ENCODE measurements at regions of chr9 and their contacts with region 1.

Region 1: DNA sequence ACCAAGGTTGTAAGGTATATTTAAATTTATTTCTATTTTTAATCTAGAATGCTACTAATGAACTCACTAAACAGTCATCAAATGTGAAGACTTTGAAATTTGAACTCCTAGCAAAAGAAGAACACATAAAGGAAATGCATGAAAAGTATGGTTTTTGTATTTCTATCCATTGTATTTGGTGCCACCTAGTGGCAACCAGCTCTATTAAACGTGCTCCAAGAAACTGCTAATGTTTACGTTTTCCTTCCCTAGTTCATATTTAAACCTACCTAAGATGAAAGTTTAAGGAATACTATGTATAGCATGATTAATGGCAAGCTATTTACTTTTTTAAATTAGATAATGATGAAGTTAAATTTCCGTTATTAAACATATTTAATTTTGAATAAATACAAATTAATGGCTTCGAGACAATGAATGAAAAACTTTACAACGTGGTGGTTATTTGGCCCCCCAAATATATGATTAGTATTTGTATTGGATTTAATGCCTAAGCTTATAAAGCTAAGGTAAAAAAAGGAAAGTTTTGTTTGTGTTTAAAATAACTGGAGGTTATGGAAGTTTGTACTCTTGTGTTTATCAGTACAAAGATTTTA is 115.9 kb upstream of the SH3GL2 start:
- DNase-seq: peak in 2 of 9 donors; percentile 0 to 25
- ATAC-seq: no peak
- H3K4me3 ChIP-seq: no peak overlapping the region
- H3K4me3 Mint-ChIP-seq: no peak overlapping the region
- H3K27ac ChIP-seq: no peak overlapping the region
- H3K27ac Mint-ChIP-seq: no peak overlapping the region
- H3K4me1 ChIP-seq: no peaks in the 10 kb centered on the region
- H3K4me1 Mint-ChIP-seq: no peaks in the 10 kb centered on the region
- H3K27me3 ChIP-seq: no peaks in the 10 kb centered on the region
- H3K27me3 Mint-ChIP-seq: no peaks in the 10 kb centered on the region

Region 2: DNA sequence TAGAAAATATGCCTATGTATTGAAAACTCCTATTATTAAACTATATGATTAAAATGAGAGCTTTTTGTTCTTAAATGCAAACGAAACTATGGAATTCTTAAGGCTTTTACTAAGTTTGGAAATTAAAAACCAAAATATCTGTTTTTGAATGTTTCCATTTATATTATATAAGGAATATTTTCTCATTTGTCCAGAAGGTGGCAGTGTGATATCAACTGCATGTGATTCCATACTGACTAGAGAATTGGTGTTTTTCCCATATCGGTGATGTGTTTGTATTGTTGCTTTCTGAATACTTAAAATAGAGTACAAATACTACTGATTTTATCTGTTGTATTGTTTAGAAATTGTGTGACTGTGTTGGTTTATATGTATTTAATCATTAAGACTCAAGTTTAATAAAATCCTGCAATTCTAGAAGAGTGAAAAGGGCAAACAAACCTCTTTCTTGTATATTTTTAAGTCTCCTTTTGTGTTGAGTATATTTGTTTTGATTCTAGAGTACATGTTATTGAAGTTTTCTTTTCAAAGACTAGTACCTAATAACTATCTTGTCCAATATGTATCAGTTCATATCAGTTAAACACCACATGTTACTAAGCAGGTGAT is 1589.3 kb before region 1 on chr9:
- CTCF ChIA-PET with region 1: no interaction called
- POLR2A ChIA-PET with region 1: no interaction called
- intact Hi-C with region 1: loop called in 1 of 2 experiments (anchors 1 kb)
- DNase-seq: peak in 5 of 9 donors; percentile 1 to 11 (median 1)
- ATAC-seq: no peak
- H3K4me3 ChIP-seq: no peak overlapping the region
- H3K4me3 Mint-ChIP-seq: no peak overlapping the region
- H3K27ac ChIP-seq: no peak overlapping the region
- H3K27ac Mint-ChIP-seq: no peak overlapping the region
- H3K4me1 ChIP-seq: no peaks in the 10 kb centered on the region
- H3K4me1 Mint-ChIP-seq: no peaks in the 10 kb centered on the region
- H3K27me3 ChIP-seq: no peaks in the 10 kb centered on the region
- H3K27me3 Mint-ChIP-seq: peaks cover 0 to 5% (median 0%) of the 10 kb centered on the region in 5 donors

Region 3: GRCh38 chr9:16191691-16192402 is 1271.1 kb before region 1 on chr9:
- CTCF ChIA-PET with region 1: no interaction called
- POLR2A ChIA-PET with region 1: no interaction called
- intact Hi-C with region 1: loop called in 1 of 2 experiments (anchors 10 kb)
- DNase-seq: peak in 1 of 9 donors; percentile 30
- ATAC-seq: peak; percentile 80
- H3K4me3 ChIP-seq: no peak overlapping the region
- H3K4me3 Mint-ChIP-seq: peak overlapping the region in 1 of 10 donors; percentile 37
- H3K27ac ChIP-seq: no peak overlapping the region
- H3K27ac Mint-ChIP-seq: no peak overlapping the region
- H3K4me1 ChIP-seq: no peaks in the 10 kb centered on the region
- H3K4me1 Mint-ChIP-seq: peaks cover 0 to 2% (median 0%) of the 10 kb centered on the region in 7 donors
- H3K27me3 ChIP-seq: no peaks in the 10 kb centered on the region
- H3K27me3 Mint-ChIP-seq: peaks cover 0 to 25% (median 6%) of the 10 kb centered on the region in 5 donors

Region 4: GRCh38 chr9:17063535-17064135 is 399.3 kb before region 1 on chr9:
- CTCF ChIA-PET with region 1: no interaction called
- POLR2A ChIA-PET with region 1: no interaction called
- intact Hi-C with region 1: loop called (anchors 1 to 2 kb)
- DNase-seq: no peak
- ATAC-seq: no peak
- H3K4me3 ChIP-seq: no peak overlapping the region
- H3K4me3 Mint-ChIP-seq: no peak overlapping the region
- H3K27ac ChIP-seq: no peak overlapping the region
- H3K27ac Mint-ChIP-seq: no peak overlapping the region
- H3K4me1 ChIP-seq: no peaks in the 10 kb centered on the region
- H3K4me1 Mint-ChIP-seq: no peaks in the 10 kb centered on the region
- H3K27me3 ChIP-seq: no peaks in the 10 kb centered on the region
- H3K27me3 Mint-ChIP-seq: no peaks in the 10 kb centered on the region

Region 5: GRCh38 chr9:17116400-17116837 is 346.5 kb before region 1 on chr9:
- CTCF ChIA-PET with region 1: no interaction called
- POLR2A ChIA-PET with region 1: no interaction called
- intact Hi-C with region 1: loop called (anchors 1 to 10 kb)
- DNase-seq: no peak
- ATAC-seq: no peak
- H3K4me3 ChIP-seq: no peak overlapping the region
- H3K4me3 Mint-ChIP-seq: no peak overlapping the region
- H3K27ac ChIP-seq: no peak overlapping the region
- H3K27ac Mint-ChIP-seq: no peak overlapping the region
- H3K4me1 ChIP-seq: no peaks in the 10 kb centered on the region
- H3K4me1 Mint-ChIP-seq: no peaks in the 10 kb centered on the region
- H3K27me3 ChIP-seq: no peaks in the 10 kb centered on the region
- H3K27me3 Mint-ChIP-seq: peaks cover 0 to 3% (median 0%) of the 10 kb centered on the region in 5 donors

Region 6: DNA sequence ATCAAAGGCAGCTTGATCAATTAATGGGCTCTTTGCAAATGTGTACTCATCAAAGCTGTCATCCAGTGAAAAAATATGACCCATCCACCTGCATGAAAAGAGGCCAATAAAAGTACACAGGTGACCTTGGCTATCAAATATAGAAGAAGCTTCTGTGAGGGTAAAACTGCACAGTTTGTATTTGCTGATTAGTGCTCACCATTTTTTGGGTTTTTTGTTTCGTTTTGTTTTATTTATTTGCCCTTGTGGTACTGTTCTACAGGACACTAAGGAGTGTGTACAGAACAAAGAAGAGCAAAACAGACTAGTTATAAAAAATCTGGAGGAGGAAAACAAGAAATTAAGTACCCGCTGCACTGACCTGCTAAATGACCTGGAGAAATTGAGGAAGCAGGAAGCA is 226.8 kb before region 1 on chr9:
- CTCF ChIA-PET with region 1: no interaction called
- POLR2A ChIA-PET with region 1: no interaction called
- intact Hi-C with region 1: no loop called
- DNase-seq: no peak
- ATAC-seq: no peak
- H3K4me3 ChIP-seq: no peak overlapping the region
- H3K4me3 Mint-ChIP-seq: no peak overlapping the region
- H3K27ac ChIP-seq: no peak overlapping the region
- H3K27ac Mint-ChIP-seq: no peak overlapping the region
- H3K4me1 ChIP-seq: no peaks in the 10 kb centered on the region
- H3K4me1 Mint-ChIP-seq: no peaks in the 10 kb centered on the region
- H3K27me3 ChIP-seq: no peaks in the 10 kb centered on the region
- H3K27me3 Mint-ChIP-seq: no peaks in the 10 kb centered on the region

Region 7: DNA sequence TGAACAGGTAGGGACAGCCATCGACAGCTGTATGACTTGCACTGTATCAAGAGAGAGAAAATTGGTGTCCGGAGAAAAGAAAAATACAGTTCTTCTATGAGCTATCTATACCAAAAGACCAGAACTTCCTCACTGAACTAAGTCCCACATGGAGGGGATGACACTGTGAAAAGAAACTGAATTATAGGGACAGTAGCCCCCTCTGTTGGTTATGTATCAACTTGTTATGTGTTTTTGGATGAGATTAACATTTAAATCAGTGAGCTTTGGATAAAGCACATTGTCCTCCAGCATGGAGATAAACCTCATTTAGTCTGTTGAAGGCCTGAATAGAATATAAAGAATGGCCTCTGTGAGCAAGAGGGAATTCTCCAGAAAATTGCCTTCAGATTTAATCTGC is 60.7 kb before region 1 on chr9:
- CTCF ChIA-PET with region 1: no interaction called
- POLR2A ChIA-PET with region 1: no interaction called
- intact Hi-C with region 1: no loop called
- DNase-seq: no peak
- ATAC-seq: no peak
- H3K4me3 ChIP-seq: no peak overlapping the region
- H3K4me3 Mint-ChIP-seq: no peak overlapping the region
- H3K27ac ChIP-seq: no peak overlapping the region
- H3K27ac Mint-ChIP-seq: no peak overlapping the region
- H3K4me1 ChIP-seq: no peaks in the 10 kb centered on the region
- H3K4me1 Mint-ChIP-seq: no peaks in the 10 kb centered on the region
- H3K27me3 ChIP-seq: no peaks in the 10 kb centered on the region
- H3K27me3 Mint-ChIP-seq: no peaks in the 10 kb centered on the region

Region 8: DNA sequence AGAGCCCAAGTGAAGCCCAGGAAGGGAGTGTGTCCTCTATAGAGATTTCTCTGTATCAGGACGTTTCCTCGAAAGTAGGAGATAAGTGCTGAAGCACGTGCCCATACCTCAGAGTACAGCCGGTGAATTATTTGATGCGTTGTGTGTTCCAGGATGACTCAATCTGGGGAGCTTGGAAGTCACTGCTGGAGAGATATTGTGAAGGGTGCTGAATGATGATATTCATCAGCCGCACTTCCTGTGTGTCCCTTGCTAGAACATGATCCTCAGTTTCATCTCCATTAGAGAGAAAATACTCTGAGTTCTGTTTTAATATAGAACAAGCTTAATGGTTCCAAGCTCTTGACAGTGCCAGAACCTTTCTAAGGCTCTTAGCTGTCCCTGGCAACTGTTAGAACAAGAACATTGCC is 608.7 kb after region 1 on chr9:
- CTCF ChIA-PET with region 1: no interaction called
- POLR2A ChIA-PET with region 1: no interaction called
- intact Hi-C with region 1: no loop called
- DNase-seq: no peak
- ATAC-seq: no peak
- H3K4me3 ChIP-seq: no peak overlapping the region
- H3K4me3 Mint-ChIP-seq: no peak overlapping the region
- H3K27ac ChIP-seq: no peak overlapping the region
- H3K27ac Mint-ChIP-seq: no peak overlapping the region
- H3K4me1 ChIP-seq: no peaks in the 10 kb centered on the region
- H3K4me1 Mint-ChIP-seq: no peaks in the 10 kb centered on the region
- H3K27me3 ChIP-seq: no peaks in the 10 kb centered on the region
- H3K27me3 Mint-ChIP-seq: no peaks in the 10 kb centered on the region